ENCODE measurements at regions of chr5 and their contacts with region 1.

Region 1: GRCh38 chr5:157718519-157718918 is 12.7 kb upstream of the THG1L start:
- DNase-seq: no peak
- H3K4me3 Mint-ChIP-seq: peak overlapping the region; percentile 45
- H3K27ac Mint-ChIP-seq: peak overlapping the region; percentile 59
- H3K4me1 Mint-ChIP-seq: peaks cover 45% of the 10 kb centered on the region
- H3K27me3 Mint-ChIP-seq: no peaks in the 10 kb centered on the region

Region 2: DNA sequence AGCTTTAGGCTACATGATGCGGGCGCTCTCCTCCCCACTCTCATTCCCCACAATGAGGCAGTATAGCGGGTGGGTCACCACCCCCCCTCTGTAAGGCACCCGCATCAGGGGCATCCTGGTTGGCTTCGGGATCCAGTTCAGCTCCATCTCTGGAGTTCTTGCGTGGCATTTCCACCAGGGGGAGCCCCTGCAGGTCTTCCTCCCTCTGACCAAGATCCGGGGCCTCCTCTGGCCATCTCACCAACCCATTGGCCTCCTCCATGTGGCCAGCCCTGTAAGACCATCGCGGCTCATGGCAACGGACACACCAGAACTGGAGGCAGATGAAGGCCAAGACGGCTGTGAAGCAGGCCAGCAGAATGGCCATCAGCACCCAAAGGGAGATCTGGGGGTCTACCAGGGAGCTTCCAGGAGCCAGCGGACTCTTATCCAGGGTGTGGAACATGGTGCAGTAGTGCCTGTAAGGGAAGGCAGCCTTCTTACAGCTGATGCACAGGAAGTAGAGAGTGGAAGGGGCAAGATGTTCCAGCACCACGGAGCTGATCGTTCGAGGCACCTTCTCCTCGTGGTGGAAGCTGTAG is 375.6 kb before region 1 on chr5:
- intact Hi-C with region 1: loop called (anchors 1 kb)
- DNase-seq: no peak
- H3K4me3 Mint-ChIP-seq: no peak overlapping the region
- H3K27ac Mint-ChIP-seq: no peak overlapping the region
- H3K4me1 Mint-ChIP-seq: peaks cover 29% of the 10 kb centered on the region
- H3K27me3 Mint-ChIP-seq: no peaks in the 10 kb centered on the region

Region 3: DNA sequence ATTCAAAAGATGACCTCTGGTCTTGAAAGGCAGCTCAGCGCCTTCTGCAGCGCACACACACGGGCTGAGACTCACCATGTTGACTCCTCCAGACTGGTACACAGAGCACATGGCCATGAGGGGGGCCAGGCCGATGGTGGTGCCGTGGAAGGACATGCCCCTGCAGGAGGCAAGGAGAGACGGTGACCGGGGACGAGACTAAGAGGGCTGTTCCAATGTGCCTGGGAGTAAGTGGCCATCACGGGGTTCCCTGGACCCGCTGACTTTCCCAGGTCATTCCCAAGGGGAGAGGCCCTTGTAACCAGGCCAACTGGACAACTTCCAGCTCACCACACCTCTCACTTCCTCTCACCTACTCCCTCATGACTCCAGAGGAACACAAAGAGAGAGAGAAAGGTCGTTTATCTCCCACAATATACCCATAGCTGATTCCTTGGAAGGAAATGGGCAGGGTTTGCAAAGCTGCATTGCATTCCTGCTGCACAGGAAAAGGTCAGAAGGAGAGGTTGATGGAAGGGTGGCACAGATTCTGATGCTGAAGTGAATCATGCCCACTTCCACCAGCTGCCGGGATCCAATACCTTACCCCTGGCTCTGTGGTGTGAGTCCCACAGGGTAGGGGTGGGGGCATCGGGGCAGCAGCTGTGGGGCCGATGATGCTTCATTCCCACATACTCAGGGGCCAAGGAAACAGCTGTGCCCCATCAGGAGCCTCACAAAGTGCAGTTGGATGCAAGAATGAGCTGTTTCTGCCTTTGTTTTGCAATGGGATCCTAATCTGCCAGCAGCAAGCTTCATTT is 211.3 kb before region 1 on chr5:
- intact Hi-C with region 1: loop called (anchors 5 kb)
- DNase-seq: no peak
- H3K4me3 Mint-ChIP-seq: no peak overlapping the region
- H3K27ac Mint-ChIP-seq: peak overlapping the region; percentile 79
- H3K4me1 Mint-ChIP-seq: peaks cover 59% of the 10 kb centered on the region
- H3K27me3 Mint-ChIP-seq: no peaks in the 10 kb centered on the region

Region 4: GRCh38 chr5:157603333-157604190 is 115.0 kb before region 1 on chr5:
- intact Hi-C with region 1: loop called (anchors 2 kb)
- DNase-seq: peak; percentile 74
- H3K4me3 Mint-ChIP-seq: peak overlapping the region; percentile 59
- H3K27ac Mint-ChIP-seq: peak overlapping the region; percentile 88
- H3K4me1 Mint-ChIP-seq: peaks cover 79% of the 10 kb centered on the region
- H3K27me3 Mint-ChIP-seq: no peaks in the 10 kb centered on the region

Region 5: DNA sequence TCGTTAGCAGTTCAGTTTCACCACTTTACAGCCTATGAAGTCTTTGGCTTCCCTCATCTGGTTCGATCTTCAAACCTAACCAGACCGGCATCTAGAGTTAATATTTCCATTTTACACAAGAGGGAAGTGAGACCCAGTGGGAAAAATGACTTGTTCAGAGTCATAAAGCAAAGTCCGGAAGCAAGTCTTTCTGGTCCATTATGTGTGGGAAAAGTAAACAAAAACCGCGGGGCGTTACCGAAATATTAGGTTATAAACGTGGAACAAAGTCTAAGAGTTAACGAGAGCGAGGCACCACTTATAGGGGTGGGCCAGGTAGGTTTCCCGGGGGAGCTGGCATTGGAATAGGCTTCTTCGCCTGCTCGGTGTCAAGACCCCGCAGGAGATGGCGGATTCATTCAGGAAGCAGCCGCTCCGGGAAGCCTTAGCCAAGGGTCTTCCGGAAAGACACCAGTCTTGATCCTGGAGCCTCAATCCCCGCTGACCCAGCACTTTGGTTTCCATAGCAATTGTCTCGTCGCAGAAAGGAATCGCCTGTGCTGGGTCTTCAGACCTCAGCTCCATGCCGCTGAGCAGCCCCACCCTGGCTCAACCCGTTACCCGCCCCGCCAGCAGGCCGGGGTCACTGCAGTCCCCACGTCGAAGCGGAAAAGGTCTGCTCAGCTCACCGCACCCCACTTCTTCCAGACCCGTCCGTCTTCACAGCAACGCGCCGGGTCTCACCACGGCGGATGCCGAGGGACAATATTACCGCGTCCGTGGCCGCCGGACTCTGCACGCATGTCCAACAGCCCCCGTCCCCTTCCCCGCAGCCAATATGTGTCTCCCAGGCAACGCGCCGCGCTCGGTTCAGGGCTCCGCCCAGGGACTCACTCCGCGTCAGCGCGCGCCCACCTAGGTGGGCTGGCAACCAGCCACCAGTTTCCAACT is 47.6 kb before region 1 on chr5 and contains the start of gene C5orf52:
- intact Hi-C with region 1: loop called (anchors 1 kb)
- DNase-seq: no peak
- H3K4me3 Mint-ChIP-seq: peak within 1 kb of the TSS; percentile 93
- H3K27ac Mint-ChIP-seq: peak within 1 kb of the TSS; percentile 82
- H3K4me1 Mint-ChIP-seq: peaks cover 42% of the 10 kb centered on the region
- H3K27me3 Mint-ChIP-seq: peaks cover 2% of the 10 kb centered on the region
- total RNA-seq, gene C5orf52: 0.39 TPM in 1 of 2 replicates, not detected in the other

Region 6: DNA sequence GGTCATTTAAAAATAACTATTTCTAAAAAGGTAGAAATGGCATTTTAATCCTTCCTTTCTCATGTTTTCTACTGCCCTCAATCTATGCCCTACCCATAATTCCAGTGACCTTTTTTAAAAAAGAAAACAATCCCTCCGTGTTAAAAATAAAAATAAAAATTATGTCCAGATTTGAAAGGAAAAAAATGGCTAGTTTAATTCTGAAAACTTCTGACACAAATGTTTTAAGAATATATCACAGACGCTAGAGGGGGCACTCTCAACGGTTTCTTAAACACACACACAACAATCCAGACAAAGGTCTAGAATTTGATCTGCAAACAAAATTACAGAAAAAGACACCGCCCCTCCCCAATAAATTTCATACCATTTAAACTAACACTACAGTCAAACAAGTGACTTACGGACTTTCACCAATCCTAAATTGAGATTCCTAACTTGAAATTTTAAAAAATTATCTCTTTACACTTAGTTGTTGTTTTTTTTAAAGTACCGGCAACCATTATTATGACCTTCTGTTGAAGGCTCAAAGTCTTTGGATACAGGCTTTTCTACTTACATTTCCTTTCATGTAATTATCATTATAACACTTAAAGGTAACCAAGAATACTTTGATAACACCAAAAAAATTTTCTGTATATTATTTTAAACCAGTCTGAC is 102.2 kb after region 1 on chr5:
- intact Hi-C with region 1: no loop called
- DNase-seq: no peak
- H3K4me3 Mint-ChIP-seq: no peak overlapping the region
- H3K27ac Mint-ChIP-seq: no peak overlapping the region
- H3K4me1 Mint-ChIP-seq: peaks cover 25% of the 10 kb centered on the region
- H3K27me3 Mint-ChIP-seq: no peaks in the 10 kb centered on the region

Measured in activated T-helper 1 cell treated with anti-CD3 and anti-CD28 coated beads, Interleukin-12 subunit alpha, Interleukin-12 subunit beta, Interleukin-2, Interleukin-4 antibody, amounts not matched to agents 30 ng/mL and 10 ng/mL and 1 ng/mL, durations not matched to agents 14 hours and 24 hours and 36 hours (primary cell).